ENCODE measurements at regions of chr16 and their contacts with region 1.

Region 1: DNA sequence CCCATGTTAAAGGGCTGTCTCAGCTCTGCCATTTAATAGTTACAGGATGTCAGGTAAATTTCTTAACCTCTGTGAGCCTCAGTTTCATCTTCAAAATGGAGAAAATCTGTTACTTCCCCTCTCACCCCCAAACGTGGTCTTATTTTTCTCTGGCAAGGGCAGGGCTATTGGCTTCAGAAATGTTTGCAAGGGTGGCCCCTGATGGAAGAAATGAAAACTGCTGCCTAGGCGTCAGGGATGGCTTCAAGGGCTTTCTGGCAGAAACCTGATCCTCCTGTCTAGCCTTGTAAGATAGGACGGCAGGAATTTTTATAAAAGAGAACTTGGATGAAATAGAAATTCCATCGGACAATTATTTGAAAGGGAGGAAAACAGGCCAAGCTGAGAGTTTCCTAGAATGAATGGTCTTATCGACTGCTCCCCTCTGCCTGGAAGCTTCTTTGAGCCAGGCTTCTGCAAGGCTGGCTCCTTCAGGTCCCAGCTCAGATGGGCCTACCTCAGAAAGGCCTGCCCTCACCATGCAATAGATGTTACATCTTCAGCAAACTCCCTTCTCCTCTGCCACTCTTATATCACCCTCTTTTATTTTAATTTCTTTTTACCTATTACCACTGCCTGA is 43.0 kb upstream of the TANGO6 start:
- DNase-seq: peak; percentile 83
- H3K4me3 Mint-ChIP-seq: no peak overlapping the region
- H3K27ac Mint-ChIP-seq: no peak overlapping the region
- H3K4me1 Mint-ChIP-seq: peaks cover 21% of the 10 kb centered on the region
- H3K27me3 Mint-ChIP-seq: no peaks in the 10 kb centered on the region
- CTCF ChIP-seq: peak; percentile 73

Region 2: DNA sequence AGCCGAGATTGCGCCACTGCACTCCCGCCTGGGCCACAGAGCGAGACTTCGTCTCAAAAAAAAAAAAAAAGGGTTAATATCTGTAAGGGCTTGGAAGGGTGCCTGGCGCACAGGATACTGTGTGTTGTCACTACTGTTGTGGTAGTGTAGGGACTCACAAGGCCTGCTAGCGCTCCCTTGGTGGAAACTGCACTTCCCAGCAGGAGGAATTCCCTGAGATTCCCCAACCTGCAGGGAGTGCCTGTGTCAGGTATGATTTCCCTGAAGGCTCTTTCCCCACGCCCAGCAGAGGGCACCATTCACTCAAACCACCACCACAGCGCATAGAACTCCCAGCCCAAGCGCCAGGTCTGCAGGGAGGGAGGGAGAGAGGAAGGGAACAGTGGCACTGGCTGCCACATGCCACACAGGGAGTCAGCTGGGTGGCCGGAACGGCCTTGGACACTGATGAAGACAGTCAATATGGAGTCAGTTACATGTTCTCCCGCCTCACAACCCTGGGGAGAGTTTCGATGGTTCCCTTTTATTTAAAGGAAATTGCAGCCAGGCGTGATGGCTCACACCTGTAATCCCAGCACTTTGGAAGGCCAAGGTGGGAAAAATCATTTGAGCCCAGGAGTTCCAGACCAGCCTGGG is 96.0 kb before region 1 on chr16:
- CTCF ChIA-PET with region 1: interaction called, 41 read pairs
- POLR2A ChIA-PET with region 1: interaction called, 20 read pairs
- intact Hi-C with region 1: loop called (anchors 1 kb)
- DNase-seq: peak; percentile 92
- H3K4me3 Mint-ChIP-seq: no peak overlapping the region
- H3K27ac Mint-ChIP-seq: no peak overlapping the region
- H3K4me1 Mint-ChIP-seq: peaks cover 20% of the 10 kb centered on the region
- H3K27me3 Mint-ChIP-seq: no peaks in the 10 kb centered on the region
- CTCF ChIP-seq: peak; percentile 81

Region 3: GRCh38 chr16:68737046-68737729 is 63.2 kb before region 1 on chr16 and contains the start of gene CDH1:
- CTCF ChIA-PET with region 1: interaction called, 4 read pairs
- POLR2A ChIA-PET with region 1: interaction called, 10 read pairs
- intact Hi-C with region 1: loop called (anchors 5 kb)
- DNase-seq: peak; percentile 84
- H3K4me3 Mint-ChIP-seq: peak within 1 kb of the TSS; percentile 79
- H3K27ac Mint-ChIP-seq: peak within 1 kb of the TSS; percentile 69
- H3K4me1 Mint-ChIP-seq: peaks cover 27% of the 10 kb centered on the region
- H3K27me3 Mint-ChIP-seq: no peaks in the 10 kb centered on the region
- CTCF ChIP-seq: no peak
- total RNA-seq, gene CDH1: 37.6 and 37.7 TPM in 2 replicates

Region 4: GRCh38 chr16:68744369-68745280 is 55.7 kb before region 1 on chr16:
- CTCF ChIA-PET with region 1: interaction called, 5 read pairs
- POLR2A ChIA-PET with region 1: interaction called, 5 read pairs
- intact Hi-C with region 1: loop called (anchors 5 kb)
- DNase-seq: peak; percentile 64
- H3K4me3 Mint-ChIP-seq: no peak overlapping the region
- H3K27ac Mint-ChIP-seq: peak overlapping the region; percentile 44
- H3K4me1 Mint-ChIP-seq: peaks cover 25% of the 10 kb centered on the region
- H3K27me3 Mint-ChIP-seq: no peaks in the 10 kb centered on the region
- CTCF ChIP-seq: no peak

Region 5: GRCh38 chr16:68790130-68790761 is 10.1 kb before region 1 on chr16:
- CTCF ChIA-PET with region 1: interaction called, 5 read pairs
- POLR2A ChIA-PET with region 1: interaction called, 19 read pairs
- intact Hi-C with region 1: no loop called
- DNase-seq: peak; percentile 78
- H3K4me3 Mint-ChIP-seq: no peak overlapping the region
- H3K27ac Mint-ChIP-seq: peak overlapping the region; percentile 65
- H3K4me1 Mint-ChIP-seq: peaks cover 16% of the 10 kb centered on the region
- H3K27me3 Mint-ChIP-seq: no peaks in the 10 kb centered on the region
- CTCF ChIP-seq: no peak

Measured in MCF 10A (cell line).